T-cell (primary cell): ENCODE measurements at regions of chr19 and their contacts with region 1.

Region 1: DNA sequence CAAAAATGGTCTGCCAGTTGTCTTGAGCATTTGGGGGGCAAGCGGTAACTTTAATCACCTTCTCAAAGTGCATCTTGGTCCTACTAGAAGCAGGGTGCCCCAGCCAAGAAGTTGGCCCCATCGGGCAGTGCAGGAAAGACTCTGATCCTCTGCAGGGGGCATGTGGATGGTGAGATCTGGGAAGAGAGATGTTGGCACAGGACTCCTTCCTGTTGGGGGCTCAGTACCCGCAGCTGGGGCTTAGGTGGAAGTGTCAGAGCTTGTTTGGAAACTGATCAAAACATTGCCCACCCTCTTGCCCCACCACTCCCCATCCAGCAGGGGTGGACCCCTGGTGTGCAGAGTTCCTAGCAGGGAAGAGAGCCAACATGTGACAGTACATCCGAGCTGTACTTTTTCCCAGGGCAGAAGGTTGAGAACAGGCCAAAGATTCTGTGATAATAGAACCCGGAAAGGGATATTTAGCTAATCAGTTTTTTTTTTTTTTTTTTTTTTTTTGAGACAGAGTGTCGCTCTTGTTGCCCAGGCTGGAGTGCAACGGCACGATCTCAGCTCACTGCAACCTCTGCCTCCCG is 8.8 kb downstream of the RRAS start:
- DNase-seq: no peak
- ATAC-seq: no peak
- H3K4me3 ChIP-seq: no peak overlapping the region
- H3K4me3 Mint-ChIP-seq: no peak overlapping the region
- H3K27ac ChIP-seq: no peak overlapping the region
- H3K27ac Mint-ChIP-seq: peak overlapping the region; percentile 43 to 55
- H3K4me1 ChIP-seq: no peaks in the 10 kb centered on the region
- H3K4me1 Mint-ChIP-seq: peaks cover 0 to 7% (median 3%) of the 10 kb centered on the region in 3 donors
- H3K27me3 ChIP-seq: no peaks in the 10 kb centered on the region
- H3K27me3 Mint-ChIP-seq: no peaks in the 10 kb centered on the region

Region 2: GRCh38 chr19:49641688-49642491 is 10.8 kb after region 1 on chr19 and contains the start of gene SCAF1:
- CTCF ChIA-PET with region 1: no interaction called
- POLR2A ChIA-PET with region 1: no interaction called
- DNase-seq: peak; percentile 96 to 100 (median 99)
- ATAC-seq: peak; percentile 68 to 73 (median 72)
- H3K4me3 ChIP-seq: peak within 1 kb of the TSS; percentile 94 to 96
- H3K4me3 Mint-ChIP-seq: peak within 1 kb of the TSS; percentile 88 to 96 (median 95)
- H3K27ac ChIP-seq: peak within 1 kb of the TSS; percentile 92
- H3K27ac Mint-ChIP-seq: peak within 1 kb of the TSS; percentile 97
- H3K4me1 ChIP-seq: peaks cover 16 to 63% of the 10 kb centered on the region in 2 experiments
- H3K4me1 Mint-ChIP-seq: peaks cover 63 to 76% (median 76%) of the 10 kb centered on the region in 3 donors
- H3K27me3 ChIP-seq: no peaks in the 10 kb centered on the region
- H3K27me3 Mint-ChIP-seq: no peaks in the 10 kb centered on the region
- total RNA-seq, gene SCAF1: 40.0 to 81.9 (median 75.4) TPM

Region 3: DNA sequence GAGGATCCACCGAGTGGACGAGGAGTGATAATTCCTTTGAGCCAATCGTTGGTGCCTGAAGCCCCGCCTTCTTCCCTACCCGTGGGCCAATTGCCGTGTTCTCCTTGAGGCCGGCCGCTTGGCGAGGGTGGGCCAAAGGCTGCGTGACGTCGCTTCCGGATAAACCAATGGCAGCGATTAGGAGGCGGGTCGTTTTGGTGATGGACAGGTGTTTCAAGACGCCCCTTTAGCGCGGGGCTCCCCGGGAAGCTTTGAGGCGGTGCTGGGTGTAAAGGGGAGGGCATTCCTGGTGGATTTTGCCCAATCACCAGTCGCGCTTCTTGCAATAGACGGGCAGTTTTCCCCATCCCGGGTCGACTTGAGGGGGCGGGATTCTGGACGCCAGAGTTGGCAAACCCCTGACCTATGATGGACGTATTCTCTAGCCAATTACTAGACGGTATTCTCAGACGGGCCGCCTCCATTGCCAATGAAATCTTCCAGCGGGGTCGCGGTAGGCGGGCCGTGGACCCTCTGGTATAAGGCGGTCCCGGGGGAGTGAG is 45.7 kb after region 1 on chr19:
- CTCF ChIA-PET with region 1: no interaction called
- POLR2A ChIA-PET with region 1: interaction called in 1 of 2 experiments, 11 read pairs
- DNase-seq: peak; percentile 93 to 100 (median 96)
- ATAC-seq: peak; percentile 76 to 78 (median 78)
- H3K4me3 ChIP-seq: peak overlapping the region; percentile 88 to 97
- H3K4me3 Mint-ChIP-seq: peak overlapping the region; percentile 94 to 100 (median 97)
- H3K27ac ChIP-seq: peak overlapping the region; percentile 99
- H3K27ac Mint-ChIP-seq: peak overlapping the region; percentile 97 to 100
- H3K4me1 ChIP-seq: peaks cover 4 to 53% of the 10 kb centered on the region in 2 experiments
- H3K4me1 Mint-ChIP-seq: peaks cover 36 to 51% (median 43%) of the 10 kb centered on the region in 3 donors
- H3K27me3 ChIP-seq: no peaks in the 10 kb centered on the region
- H3K27me3 Mint-ChIP-seq: no peaks in the 10 kb centered on the region